Caco-2 (cell line): ENCODE measurements at regions of chr15 and their contacts with region 1.

Region 1: DNA sequence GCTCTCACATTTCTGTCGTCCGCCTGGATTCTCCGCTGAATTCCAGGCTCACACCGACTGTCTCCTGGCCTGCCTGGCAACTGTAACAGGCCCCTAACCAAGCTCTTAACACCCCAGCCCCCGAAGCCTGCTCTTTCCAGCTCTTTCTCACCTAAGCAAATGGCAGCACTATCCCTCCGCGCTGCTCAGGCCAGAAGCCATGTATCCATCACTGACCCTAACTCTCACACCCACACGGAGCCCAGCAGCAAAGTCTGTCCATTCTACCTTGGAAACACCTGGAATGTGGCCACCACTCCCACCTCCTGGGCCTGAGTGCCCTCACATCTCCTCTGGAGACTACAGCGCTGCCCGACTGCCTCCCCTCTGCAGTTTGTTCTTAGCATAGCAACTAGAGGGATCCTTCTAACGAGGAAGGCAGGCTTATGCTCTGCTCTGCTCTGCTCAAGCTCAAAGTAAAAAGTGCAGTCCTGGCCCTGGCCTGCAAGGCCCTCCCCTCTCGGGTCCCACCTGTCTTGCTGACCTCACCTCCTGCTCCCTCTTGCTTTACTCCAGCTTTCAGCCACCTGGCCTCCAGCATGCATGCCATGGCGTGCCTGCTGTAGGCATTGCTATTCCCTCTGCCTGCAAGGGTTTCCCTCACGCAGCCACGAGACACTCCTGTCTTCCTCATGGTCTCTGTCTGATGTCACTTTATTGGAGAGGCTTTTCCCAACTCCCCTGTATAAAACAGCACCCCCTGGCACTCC is 27.2 kb downstream of the FEM1B start:
- DNase-seq: peak in 1 of 2 experiments; percentile 33
- H3K4me3 ChIP-seq: no peak overlapping the region
- H3K4me3 Mint-ChIP-seq: no peak overlapping the region
- H3K27ac Mint-ChIP-seq: peak overlapping the region; percentile 19
- H3K4me1 ChIP-seq: peaks cover 23% of the 10 kb centered on the region
- H3K4me1 Mint-ChIP-seq: peaks cover 30% of the 10 kb centered on the region
- H3K27me3 ChIP-seq: no peaks in the 10 kb centered on the region
- H3K27me3 Mint-ChIP-seq: no peaks in the 10 kb centered on the region
- CTCF ChIP-seq: peak in 1 of 2 experiments; percentile 25

Region 2: DNA sequence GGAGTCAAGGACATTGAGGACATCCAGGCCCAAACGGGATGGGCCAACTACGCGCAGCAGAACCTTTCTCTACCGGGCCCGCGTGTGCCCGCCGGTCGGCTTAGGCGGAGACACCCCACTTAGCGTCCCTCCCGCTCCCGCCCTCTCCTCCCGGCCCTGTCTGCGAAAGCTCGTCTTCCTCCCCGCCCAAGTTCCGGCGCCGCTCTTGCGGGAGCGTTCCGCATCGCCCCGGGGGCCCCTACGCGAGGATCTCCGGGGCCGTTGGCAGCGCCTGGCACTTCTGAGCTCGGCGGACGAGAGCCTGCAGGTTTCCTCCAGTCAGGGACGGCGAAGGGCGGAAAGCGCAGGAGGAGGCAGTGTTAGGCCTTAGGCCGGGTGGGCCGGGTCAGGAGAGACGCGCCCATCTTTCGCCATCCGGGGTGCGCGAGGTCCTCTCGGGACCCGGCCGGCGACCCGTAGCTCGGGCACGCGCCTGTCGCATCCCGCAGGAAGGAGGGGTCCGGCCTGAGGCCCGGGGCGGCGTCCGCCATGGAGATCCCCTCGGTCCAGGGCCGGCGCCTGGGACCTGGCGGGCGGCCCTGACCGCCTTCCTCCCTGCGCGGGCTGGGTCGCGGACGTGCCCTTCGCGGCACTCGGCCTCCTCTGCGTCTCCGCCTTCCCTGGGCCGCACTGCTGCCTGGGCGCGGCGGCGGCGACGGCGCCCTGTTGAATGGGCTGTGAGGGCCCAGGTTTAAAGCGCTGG is 27.0 kb before region 1 on chr15 and contains the start of gene FEM1B:
- CTCF ChIA-PET with region 1: interaction called, 11 read pairs
- POLR2A ChIA-PET with region 1: interaction called, 4 read pairs
- intact Hi-C with region 1: no loop called
- DNase-seq: peak; percentile 90 to 91
- H3K4me3 ChIP-seq: peak within 1 kb of the TSS; percentile 61
- H3K4me3 Mint-ChIP-seq: peak within 1 kb of the TSS; percentile 95
- H3K27ac Mint-ChIP-seq: peak within 1 kb of the TSS; percentile 93
- H3K4me1 ChIP-seq: peaks cover 45% of the 10 kb centered on the region
- H3K4me1 Mint-ChIP-seq: peaks cover 50% of the 10 kb centered on the region
- H3K27me3 ChIP-seq: no peaks in the 10 kb centered on the region
- H3K27me3 Mint-ChIP-seq: no peaks in the 10 kb centered on the region
- CTCF ChIP-seq: no peak
- total RNA-seq, gene FEM1B: 33.5 and 41.0 TPM in 2 replicates

Region 3: DNA sequence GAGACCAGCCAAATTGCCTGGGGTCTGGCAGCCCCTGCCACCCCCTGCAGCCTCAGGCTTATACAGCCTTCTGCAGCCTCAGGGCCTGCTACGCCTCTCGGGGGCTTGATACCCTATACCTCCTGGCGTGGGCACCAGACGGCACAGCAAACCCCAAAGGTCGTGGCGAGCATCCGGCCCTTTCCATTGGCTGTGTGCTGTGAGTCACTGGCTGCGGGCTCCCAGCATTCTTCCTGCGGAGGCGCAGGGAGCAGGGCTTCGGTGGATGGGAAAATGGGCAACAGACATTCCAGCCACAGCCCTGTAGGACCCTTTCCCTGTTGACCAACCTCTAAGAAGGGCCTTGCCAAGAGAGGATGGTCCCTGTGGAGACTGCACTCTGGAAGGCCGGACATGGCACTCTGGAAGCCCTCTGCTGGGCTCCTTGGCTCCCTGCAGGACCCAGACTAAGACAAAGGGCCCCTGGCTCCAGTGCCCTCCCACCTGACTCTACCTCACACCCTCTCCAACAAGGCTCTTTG is 67.6 kb after region 1 on chr15:
- CTCF ChIA-PET with region 1: interaction called, 3 read pairs
- POLR2A ChIA-PET with region 1: no interaction called
- intact Hi-C with region 1: loop called (anchors 2 kb)
- DNase-seq: peak in 1 of 2 experiments; percentile 36
- H3K4me3 ChIP-seq: no peak overlapping the region
- H3K4me3 Mint-ChIP-seq: no peak overlapping the region
- H3K27ac Mint-ChIP-seq: no peak overlapping the region
- H3K4me1 ChIP-seq: no peaks in the 10 kb centered on the region
- H3K4me1 Mint-ChIP-seq: no peaks in the 10 kb centered on the region
- H3K27me3 ChIP-seq: no peaks in the 10 kb centered on the region
- H3K27me3 Mint-ChIP-seq: no peaks in the 10 kb centered on the region
- CTCF ChIP-seq: peak in 1 of 2 experiments; percentile 53

Region 4: GRCh38 chr15:68431792-68432401 is 127.1 kb after region 1 on chr15 and contains the start of gene ITGA11:
- CTCF ChIA-PET with region 1: no interaction called
- POLR2A ChIA-PET with region 1: no interaction called
- intact Hi-C with region 1: loop called (anchors 10 kb)
- DNase-seq: peak in 1 of 2 experiments; percentile 67
- H3K4me3 ChIP-seq: peak within 1 kb of the TSS; percentile 43
- H3K4me3 Mint-ChIP-seq: peak within 1 kb of the TSS; percentile 69
- H3K27ac Mint-ChIP-seq: no peak within 1 kb of the TSS
- H3K4me1 ChIP-seq: peaks cover 6% of the 10 kb centered on the region
- H3K4me1 Mint-ChIP-seq: no peaks in the 10 kb centered on the region
- H3K27me3 ChIP-seq: no peaks in the 10 kb centered on the region; the same call in 1 of the 2 replicates
- H3K27me3 Mint-ChIP-seq: peaks cover 16% of the 10 kb centered on the region
- CTCF ChIP-seq: no peak
- total RNA-seq, gene ITGA11: 0.18 TPM in 1 of 2 replicates, not detected in the other

Region 5: DNA sequence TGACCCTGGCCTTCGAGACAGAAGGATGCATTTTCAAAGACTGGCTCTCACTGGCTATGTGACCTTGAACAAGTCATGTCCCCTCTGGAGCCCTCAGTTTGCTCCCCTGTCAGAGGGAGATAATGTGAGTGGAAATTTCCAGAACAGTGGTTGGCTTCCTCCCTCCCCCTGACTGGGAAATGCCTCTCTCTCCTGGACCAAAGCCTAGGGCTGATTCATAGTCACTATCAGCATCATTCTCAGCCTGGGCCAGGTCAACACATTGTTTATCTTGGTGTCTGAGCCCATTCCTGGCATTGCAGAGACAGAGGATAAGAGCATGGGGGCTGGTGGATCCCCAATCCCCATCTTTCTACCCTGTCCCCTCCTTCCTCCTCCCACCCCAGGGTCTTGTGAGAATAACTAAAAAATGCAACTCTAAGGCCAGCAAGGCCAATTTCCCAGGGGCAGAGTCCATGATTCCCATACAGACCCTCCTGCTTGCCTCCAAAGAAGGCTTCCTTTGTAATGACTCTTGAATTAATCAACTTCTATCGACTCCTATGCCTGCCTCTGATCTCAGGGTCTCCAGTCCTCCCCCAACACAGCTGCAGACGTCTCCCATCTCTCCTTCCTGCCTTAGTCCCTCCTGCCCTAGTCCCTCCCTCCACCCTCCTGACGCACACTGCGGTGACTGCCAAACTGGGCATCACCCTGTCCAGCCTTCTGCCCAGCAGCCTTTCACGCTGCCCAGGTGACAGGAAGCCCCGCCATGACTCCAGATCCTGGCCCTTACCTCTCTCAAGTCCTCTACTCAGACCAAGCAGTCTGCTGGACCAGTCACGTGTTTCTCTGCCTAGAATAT is 238.6 kb after region 1 on chr15:
- CTCF ChIA-PET with region 1: interaction called, 23 read pairs
- POLR2A ChIA-PET with region 1: no interaction called
- intact Hi-C with region 1: loop called (anchors 1 kb)
- DNase-seq: peak in 1 of 2 experiments; percentile 18
- H3K4me3 ChIP-seq: no peak overlapping the region
- H3K4me3 Mint-ChIP-seq: no peak overlapping the region
- H3K27ac Mint-ChIP-seq: peak overlapping the region; percentile 69
- H3K4me1 ChIP-seq: no peaks in the 10 kb centered on the region
- H3K4me1 Mint-ChIP-seq: peaks cover 9% of the 10 kb centered on the region
- H3K27me3 ChIP-seq: no peaks in the 10 kb centered on the region
- H3K27me3 Mint-ChIP-seq: peaks cover 7% of the 10 kb centered on the region
- CTCF ChIP-seq: no peak